Activated CD4-positive, alpha-beta T cell treated with anti-CD3 and anti-CD28 coated beads, Interleukin-2, amount 10 ng/mL, durations not matched to agents 7 days and 5 days (primary cell): ENCODE measurements at regions of chr6 and their contacts with region 1.

Region 1: GRCh38 chr6:52995913-52996645 is 995 bp upstream of the GSTA4 start:
- DNase-seq: peak; percentile 28
- H3K4me3 Mint-ChIP-seq: peak overlapping the region; percentile 77
- H3K27ac Mint-ChIP-seq: peak overlapping the region; percentile 98
- H3K4me1 Mint-ChIP-seq: peaks cover 30% of the 10 kb centered on the region
- H3K27me3 Mint-ChIP-seq: peaks cover 11% of the 10 kb centered on the region

Region 2: GRCh38 chr6:52984247-52984646 is 11.8 kb before region 1 on chr6:
- CTCF ChIA-PET with region 1: interaction called, 19 read pairs
- POLR2A ChIA-PET with region 1: interaction called, 4 read pairs
- DNase-seq: peak; percentile 75
- H3K4me3 Mint-ChIP-seq: peak overlapping the region; percentile 45
- H3K27ac Mint-ChIP-seq: peak overlapping the region; percentile 62
- H3K4me1 Mint-ChIP-seq: peaks cover 39% of the 10 kb centered on the region
- H3K27me3 Mint-ChIP-seq: peaks cover 21% of the 10 kb centered on the region

Region 3: DNA sequence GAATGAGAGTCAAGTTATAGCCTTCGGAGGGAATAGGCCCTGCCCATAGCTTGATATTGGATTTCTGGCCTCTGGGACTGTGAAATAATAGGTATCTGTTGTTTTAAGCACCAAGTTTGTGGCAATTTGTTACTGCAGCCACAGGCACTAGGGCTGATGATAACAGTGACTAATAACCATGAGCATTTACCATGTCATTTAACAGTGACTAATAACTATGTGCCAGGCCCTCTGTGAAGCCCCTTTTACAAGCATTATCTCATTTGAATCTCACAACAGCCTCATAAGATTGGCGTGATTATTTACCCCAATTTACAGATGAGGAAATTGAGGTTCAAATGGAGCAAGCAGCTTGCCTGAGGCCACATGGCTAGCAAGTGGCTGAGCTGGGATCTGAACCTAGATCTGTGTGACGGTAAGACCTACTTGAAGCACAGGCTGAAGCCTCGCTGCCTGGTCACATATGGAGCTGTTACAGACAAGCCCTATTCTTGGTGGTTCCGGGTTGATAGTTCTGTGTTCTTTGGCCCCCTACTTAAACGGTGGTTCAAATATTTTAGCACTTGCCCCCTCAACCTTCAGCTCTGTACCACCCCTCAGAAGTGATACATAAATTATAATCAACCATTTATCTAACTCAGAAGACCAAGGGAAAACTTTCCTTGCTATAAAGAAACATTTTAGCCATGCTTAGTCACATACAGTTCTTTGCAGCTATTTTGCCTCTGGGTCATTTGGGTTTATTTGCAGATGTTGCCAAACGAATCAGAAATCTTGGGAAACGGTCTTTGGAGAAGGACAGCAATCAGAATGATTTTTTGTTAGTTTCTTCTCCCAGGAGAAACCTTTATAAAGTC is 254.3 kb after region 1 on chr6:
- CTCF ChIA-PET with region 1: no interaction called
- POLR2A ChIA-PET with region 1: no interaction called
- DNase-seq: no peak
- H3K4me3 Mint-ChIP-seq: no peak overlapping the region
- H3K27ac Mint-ChIP-seq: no peak overlapping the region
- H3K4me1 Mint-ChIP-seq: peaks cover under 1% of the 10 kb centered on the region
- H3K27me3 Mint-ChIP-seq: no peaks in the 10 kb centered on the region